Ovary (tissue), 10 donors: ENCODE measurements at regions of chr20 and their contacts with region 1.

Region 1: GRCh38 chr20:354298-355064 is 7.6 kb downstream of the NRSN2 start:
- DNase-seq: peak; percentile 65 to 81 (median 79)
- H3K4me3 ChIP-seq: no peak overlapping the region
- H3K27ac ChIP-seq: no peak overlapping the region
- H3K4me1 ChIP-seq: no peaks in the 10 kb centered on the region
- H3K27me3 ChIP-seq: no peaks in the 10 kb centered on the region
- CTCF ChIP-seq: peak; percentile 78 to 93 (median 86)
- EP300 ChIP-seq: no peak
- POLR2A ChIP-seq: no peak

Region 2: DNA sequence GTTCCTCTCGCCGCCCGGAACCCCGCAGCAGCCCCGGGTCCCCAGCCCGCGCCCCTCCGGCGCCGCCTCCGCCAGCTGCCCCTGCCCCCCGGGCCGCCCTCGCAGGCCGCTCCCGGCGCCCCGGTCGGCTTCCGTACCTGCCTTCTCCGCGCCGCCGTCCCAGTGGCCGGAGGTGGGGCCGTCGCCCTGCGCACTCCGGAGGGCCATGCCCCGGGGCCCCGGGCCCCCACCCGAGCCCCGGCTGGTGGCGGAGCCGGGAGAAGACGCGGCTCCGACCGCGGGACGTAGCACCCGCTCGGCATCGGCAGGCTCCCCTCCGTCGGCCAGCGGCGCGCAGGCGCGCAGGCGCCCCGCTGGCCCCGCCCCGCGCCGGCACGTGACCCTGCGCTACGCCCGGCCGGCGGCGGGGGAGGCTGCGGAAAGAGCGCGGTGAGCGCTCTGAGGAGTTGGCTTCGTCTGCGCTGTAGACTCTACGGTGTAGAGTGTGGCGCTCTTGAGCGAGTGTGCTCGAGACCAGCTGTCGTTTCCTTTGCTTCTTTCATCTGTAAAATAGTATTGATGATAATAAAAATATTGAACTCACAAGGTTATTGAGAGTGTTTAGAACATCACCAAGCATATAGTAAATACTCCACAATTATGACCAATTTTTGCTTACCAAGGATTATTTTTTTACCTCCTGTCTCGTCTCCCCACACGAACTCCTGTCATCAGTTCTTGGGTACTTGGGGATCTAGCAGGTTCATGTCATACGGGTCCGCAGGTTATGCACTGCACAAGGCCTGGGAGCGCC is 107.9 kb after region 1 on chr20 and contains the start of gene TBC1D20:
- intact Hi-C with region 1: loop called in 1 of 4 experiments (anchors 5 kb)
- DNase-seq: peak; percentile 82 to 90 (median 87)
- H3K4me3 ChIP-seq: peak within 1 kb of the TSS; percentile 73
- H3K27ac ChIP-seq: peak within 1 kb of the TSS; percentile 79 to 91
- H3K4me1 ChIP-seq: peaks cover 6% of the 10 kb centered on the region
- H3K27me3 ChIP-seq: no peaks in the 10 kb centered on the region
- CTCF ChIP-seq: peak in 2 of 3 donors; percentile 19 to 20
- EP300 ChIP-seq: no peak
- POLR2A ChIP-seq: peak; percentile 73
- total RNA-seq, gene TBC1D20: 24.9 to 40.1 (median 34.8) TPM

Region 3: GRCh38 chr20:478949-479429 is 124.5 kb after region 1 on chr20:
- intact Hi-C with region 1: loop called in 3 of 4 experiments (anchors 2 to 5 kb)
- DNase-seq: no peak
- H3K4me3 ChIP-seq: no peak overlapping the region
- H3K27ac ChIP-seq: no peak overlapping the region
- H3K4me1 ChIP-seq: no peaks in the 10 kb centered on the region
- H3K27me3 ChIP-seq: no peaks in the 10 kb centered on the region
- CTCF ChIP-seq: peak in 2 of 3 donors; percentile 39 to 48
- EP300 ChIP-seq: no peak
- POLR2A ChIP-seq: no peak

Region 4: DNA sequence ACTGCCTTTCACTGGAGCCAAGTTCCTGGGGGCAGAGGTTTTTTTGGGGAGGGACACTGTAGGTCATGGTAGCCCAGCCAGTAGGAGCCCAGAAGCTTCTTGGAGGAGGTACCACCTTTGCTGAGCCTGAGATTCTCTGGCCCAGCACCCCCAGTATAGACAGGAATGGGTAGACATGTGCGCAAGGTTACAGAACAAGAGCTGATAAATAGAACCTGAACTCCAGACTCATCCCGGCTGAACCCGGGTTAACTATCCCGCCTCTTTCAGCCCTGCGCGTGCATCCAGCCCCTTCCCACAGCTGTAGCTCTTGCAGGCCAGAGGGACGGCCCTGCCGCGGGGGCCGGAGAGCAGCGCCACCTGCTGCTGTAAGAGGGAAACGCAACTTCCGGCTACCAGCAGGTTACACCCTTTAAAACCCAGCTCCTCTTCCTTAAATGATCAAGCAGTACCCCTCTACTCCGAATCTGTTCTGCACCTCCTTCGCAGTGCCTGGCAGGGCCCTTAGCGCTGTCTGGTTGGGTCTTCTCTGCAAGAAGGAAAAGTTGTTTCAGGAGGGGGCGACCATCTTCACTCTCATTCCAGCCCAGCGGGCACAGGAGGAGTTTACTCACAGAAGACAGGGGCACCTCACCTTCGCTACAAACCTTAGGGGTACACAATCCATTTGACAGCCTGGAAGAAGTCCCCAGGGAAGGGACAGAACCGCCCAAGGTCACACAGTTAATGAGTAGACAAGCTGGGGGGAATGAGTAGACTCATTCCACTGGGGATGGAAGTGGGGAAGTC is 291.0 kb after region 1 on chr20:
- intact Hi-C with region 1: loop called in 1 of 4 experiments (anchors 5 kb)
- DNase-seq: peak; percentile 58 to 87 (median 72)
- H3K4me3 ChIP-seq: no peak overlapping the region
- H3K27ac ChIP-seq: no peak overlapping the region
- H3K4me1 ChIP-seq: peaks cover 3% of the 10 kb centered on the region
- H3K27me3 ChIP-seq: no peaks in the 10 kb centered on the region
- CTCF ChIP-seq: peak; percentile 73 to 79 (median 79)
- EP300 ChIP-seq: no peak
- POLR2A ChIP-seq: no peak

Region 5: GRCh38 chr20:667391-667964 is 313.0 kb after region 1 on chr20:
- intact Hi-C with region 1: loop called in 1 of 4 experiments (anchors 10 kb)
- DNase-seq: no peak
- H3K4me3 ChIP-seq: no peak overlapping the region
- H3K27ac ChIP-seq: no peak overlapping the region
- H3K4me1 ChIP-seq: no peaks in the 10 kb centered on the region
- H3K27me3 ChIP-seq: no peaks in the 10 kb centered on the region
- CTCF ChIP-seq: no peak
- EP300 ChIP-seq: no peak
- POLR2A ChIP-seq: no peak

Region 6: GRCh38 chr20:740141-740540 is 385.7 kb after region 1 on chr20:
- intact Hi-C with region 1: loop called in 1 of 4 experiments (anchors 5 kb)
- DNase-seq: no peak
- H3K4me3 ChIP-seq: no peak overlapping the region
- H3K27ac ChIP-seq: no peak overlapping the region
- H3K4me1 ChIP-seq: no peaks in the 10 kb centered on the region
- H3K27me3 ChIP-seq: no peaks in the 10 kb centered on the region
- CTCF ChIP-seq: no peak
- EP300 ChIP-seq: no peak
- POLR2A ChIP-seq: no peak